PC-9 (cell line): ENCODE measurements at regions of chr2 and their contacts with region 1.

Region 1: DNA sequence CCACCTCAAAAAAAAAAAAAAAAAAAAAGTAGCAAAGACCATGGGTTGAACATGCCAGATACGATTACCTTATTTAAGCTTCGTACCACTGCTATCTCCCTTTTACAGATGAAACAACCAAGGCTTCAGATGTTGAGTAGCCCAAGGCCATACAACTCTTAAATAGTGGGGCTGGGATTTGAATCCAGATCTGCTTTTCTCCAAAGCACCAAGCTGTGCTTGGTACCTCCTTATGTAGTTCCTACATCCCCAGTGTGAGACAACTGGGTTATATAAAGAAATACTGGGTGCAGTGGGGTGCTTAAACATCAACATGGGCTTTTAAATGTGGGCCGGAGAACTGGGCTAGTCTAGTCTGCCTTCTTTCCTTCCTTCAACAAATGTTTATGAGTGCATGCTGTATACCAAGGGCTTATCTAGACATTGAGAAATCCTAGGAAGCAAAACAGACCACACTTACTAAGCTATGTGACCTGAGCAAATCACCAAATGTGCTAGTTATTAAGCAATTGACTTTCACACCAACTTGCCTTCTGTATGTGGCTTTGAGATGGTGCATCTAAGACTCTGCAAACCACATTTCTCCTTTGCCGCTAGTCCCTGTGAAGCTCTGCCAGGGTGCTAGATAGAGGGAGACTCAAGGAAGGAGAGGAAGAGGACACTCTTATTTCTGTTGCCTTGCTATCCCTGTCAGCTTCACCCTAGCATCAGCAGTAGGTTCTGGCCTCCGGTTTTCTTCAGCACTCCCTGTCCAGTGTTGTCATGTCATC is 206.8 kb upstream of the FBXO11 start:
- DNase-seq: peak in 1 of 2 experiments; percentile 80
- H3K4me3 ChIP-seq: no peak overlapping the region
- H3K27ac ChIP-seq: peak overlapping the region; percentile 91
- H3K4me1 ChIP-seq: peaks cover 63% of the 10 kb centered on the region
- H3K27me3 ChIP-seq: no peaks in the 10 kb centered on the region
- CTCF ChIP-seq: no peak

Region 2: DNA sequence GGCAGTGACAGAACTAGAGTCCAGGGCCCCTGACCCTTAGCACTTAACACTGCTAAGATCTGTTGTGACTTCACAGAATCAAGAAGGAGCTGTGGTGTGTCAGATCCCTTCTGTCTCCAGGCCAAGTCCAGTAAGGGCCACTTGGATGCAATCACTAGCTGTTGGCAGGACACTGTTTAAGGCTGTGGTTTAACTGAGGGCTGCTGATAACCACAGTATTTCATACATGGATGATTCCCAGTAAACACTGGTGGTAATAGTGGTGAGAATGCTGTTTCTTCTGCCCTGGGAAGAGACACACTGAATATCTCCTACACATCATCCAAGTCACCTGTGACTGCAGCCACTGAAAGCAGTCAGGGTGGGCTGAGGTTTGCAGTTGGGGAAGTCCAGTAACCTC is 129.1 kb before region 1 on chr2:
- CTCF ChIA-PET with region 1: no interaction called
- POLR2A ChIA-PET with region 1: no interaction called
- intact Hi-C with region 1: no loop called
- DNase-seq: no peak
- H3K4me3 ChIP-seq: no peak overlapping the region
- H3K27ac ChIP-seq: no peak overlapping the region
- H3K4me1 ChIP-seq: no peaks in the 10 kb centered on the region
- H3K27me3 ChIP-seq: no peaks in the 10 kb centered on the region
- CTCF ChIP-seq: no peak

Region 3: DNA sequence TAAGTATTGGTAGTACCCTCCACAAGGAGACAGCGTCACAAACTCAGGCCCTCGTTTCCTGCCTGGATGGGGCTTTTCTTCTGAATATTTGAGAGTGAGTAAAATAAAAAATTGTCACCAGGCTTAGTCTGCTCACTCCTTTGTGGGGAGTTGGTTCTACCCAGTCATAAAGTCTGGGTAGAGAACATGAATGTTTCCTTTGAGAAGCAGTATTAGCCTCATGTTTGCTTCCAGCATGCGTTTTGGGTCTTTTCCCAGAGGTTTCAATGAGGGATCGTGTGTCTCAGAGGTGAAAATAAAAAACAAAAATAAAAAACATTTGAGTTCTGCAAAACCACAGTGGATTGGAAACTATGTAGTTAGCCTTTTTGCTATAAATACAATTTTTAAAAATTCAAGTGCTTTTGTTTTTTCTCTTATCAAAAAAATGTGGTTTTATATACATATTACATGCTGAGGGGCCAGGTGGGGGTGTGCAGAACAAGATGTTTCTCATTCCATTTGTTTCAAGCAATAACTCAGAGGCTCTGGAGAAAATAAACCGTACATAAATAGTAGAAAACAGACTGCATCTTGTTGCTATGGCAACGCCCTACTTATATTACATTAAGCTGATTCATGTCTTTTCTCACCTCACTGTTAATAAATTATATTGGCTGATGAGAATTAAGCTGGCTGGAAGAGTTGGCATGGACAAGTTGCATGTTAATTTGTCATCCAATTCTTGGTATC is 18.6 kb after region 1 on chr2:
- CTCF ChIA-PET with region 1: interaction called, 13 read pairs
- POLR2A ChIA-PET with region 1: no interaction called
- intact Hi-C with region 1: no loop called
- DNase-seq: no peak
- H3K4me3 ChIP-seq: no peak overlapping the region
- H3K27ac ChIP-seq: no peak overlapping the region
- H3K4me1 ChIP-seq: no peaks in the 10 kb centered on the region
- H3K27me3 ChIP-seq: no peaks in the 10 kb centered on the region
- CTCF ChIP-seq: no peak